ENCODE measurements at regions of chr2 and their contacts with region 1.

Region 1: GRCh38 chr2:190121971-190122370 is 59.4 kb upstream of the MSTN start:
- DNase-seq: no peak
- ATAC-seq: no peak
- H3K4me3 ChIP-seq: no peak overlapping the region
- H3K27ac ChIP-seq: no peak overlapping the region
- H3K4me1 ChIP-seq: peaks cover 8% of the 10 kb centered on the region in 2 donors
- H3K27me3 ChIP-seq: no peaks in the 10 kb centered on the region
- CTCF ChIP-seq: peak in 4 of 5 experiments; percentile 24 to 62 (median 41)
- POLR2A ChIP-seq: no peak

Region 2: DNA sequence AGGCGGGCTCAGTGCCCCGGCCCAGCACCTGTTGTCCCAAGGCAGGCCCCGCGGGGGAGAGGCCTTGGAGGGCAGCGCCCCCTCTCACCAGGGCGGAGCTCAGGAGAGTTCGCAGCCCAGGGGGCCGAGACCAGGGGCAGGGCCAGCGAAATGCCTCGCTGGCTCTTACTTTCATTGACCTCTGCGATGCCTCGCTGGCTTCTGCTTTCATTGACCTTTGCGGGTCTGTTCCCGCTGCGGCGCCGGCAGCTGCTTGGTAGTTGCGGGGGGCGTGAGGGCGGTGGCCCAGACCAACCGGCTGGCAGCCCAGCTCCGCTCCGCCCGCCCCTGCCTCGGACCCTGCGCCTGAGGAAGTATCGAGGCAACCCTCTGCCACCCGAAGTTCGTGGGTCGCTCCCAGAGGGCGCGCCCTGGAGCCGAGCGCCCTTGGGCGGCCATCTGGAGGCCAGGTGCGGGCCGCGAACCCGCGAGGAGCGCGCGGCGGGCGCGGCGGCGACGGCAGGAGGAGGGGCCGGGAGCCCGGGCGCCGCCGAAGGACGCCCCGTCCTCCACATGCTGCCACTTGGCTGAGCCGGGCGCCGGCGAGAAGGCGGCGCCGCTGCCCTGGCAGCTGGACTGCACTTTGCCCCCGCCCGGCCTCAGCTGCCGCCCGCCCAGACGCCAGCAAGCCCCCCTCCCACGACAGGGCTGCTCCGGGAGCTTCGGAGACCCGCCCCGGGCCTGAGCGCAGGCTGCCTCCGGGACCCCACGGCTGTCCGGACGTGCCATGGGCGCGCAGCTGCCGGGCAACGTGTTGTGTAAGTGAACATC is 58.5 kb after region 1 on chr2:
- in situ Hi-C with region 1: no loop called
- intact Hi-C with region 1: loop called (anchors 5 kb)
- DNase-seq: peak; percentile 31 to 80
- ATAC-seq: peak; percentile 70 to 81
- H3K4me3 ChIP-seq: peak overlapping the region; percentile 57 to 80 (median 78)
- H3K27ac ChIP-seq: peak overlapping the region; percentile 82 to 94 (median 85)
- H3K4me1 ChIP-seq: peaks cover 0 to 4% of the 10 kb centered on the region in 2 donors
- H3K27me3 ChIP-seq: no peaks in the 10 kb centered on the region
- CTCF ChIP-seq: peak in 3 of 5 experiments; percentile 59 to 74 (median 68)
- POLR2A ChIP-seq: peak; percentile 43 to 44

Region 3: GRCh38 chr2:190214426-190215194 is 92.6 kb after region 1 on chr2:
- in situ Hi-C with region 1: no loop called
- intact Hi-C with region 1: no loop called
- DNase-seq: no peak
- ATAC-seq: no peak
- H3K4me3 ChIP-seq: no peak overlapping the region
- H3K27ac ChIP-seq: no peak overlapping the region
- H3K4me1 ChIP-seq: no peaks in the 10 kb centered on the region
- H3K27me3 ChIP-seq: no peaks in the 10 kb centered on the region
- CTCF ChIP-seq: no peak
- POLR2A ChIP-seq: no peak

Measured in gastrocnemius medialis (tissue), 4 donors.